Naive thymus-derived CD4-positive, alpha-beta T cell (primary cell): ENCODE measurements at regions of chr19 and their contacts with region 1.

Region 1: GRCh38 chr19:11587302-11587974 is 9.8 kb upstream of the ZNF627 start:
- DNase-seq: peak; percentile 58 to 80 (median 66)
- ATAC-seq: peak; percentile 95
- H3K4me3 ChIP-seq: no peak overlapping the region
- H3K4me3 Mint-ChIP-seq: no peak overlapping the region
- H3K27ac ChIP-seq: no peak overlapping the region
- H3K27ac Mint-ChIP-seq: peak overlapping the region in 1 of 9 donors; percentile 36
- H3K4me1 ChIP-seq: no peaks in the 10 kb centered on the region
- H3K4me1 Mint-ChIP-seq: peaks cover 0 to 16% (median 7%) of the 10 kb centered on the region in 7 donors
- H3K27me3 ChIP-seq: no peaks in the 10 kb centered on the region
- H3K27me3 Mint-ChIP-seq: no peaks in the 10 kb centered on the region

Region 2: GRCh38 chr19:11137542-11138384 is 449.7 kb before region 1 on chr19:
- CTCF ChIA-PET with region 1: no interaction called
- POLR2A ChIA-PET with region 1: no interaction called
- intact Hi-C with region 1: loop called in 1 of 2 experiments (anchors 1 kb)
- DNase-seq: peak; percentile 27 to 64 (median 56)
- ATAC-seq: peak; percentile 81
- H3K4me3 ChIP-seq: peak overlapping the region; percentile 52
- H3K4me3 Mint-ChIP-seq: peak overlapping the region; percentile 76 to 90 (median 86)
- H3K27ac ChIP-seq: no peak overlapping the region
- H3K27ac Mint-ChIP-seq: peak overlapping the region in 8 of 9 donors; percentile 37 to 81 (median 66)
- H3K4me1 ChIP-seq: peaks cover 4 to 12% of the 10 kb centered on the region in 2 donors
- H3K4me1 Mint-ChIP-seq: peaks cover 7 to 23% (median 11%) of the 10 kb centered on the region in 7 donors
- H3K27me3 ChIP-seq: no peaks in the 10 kb centered on the region
- H3K27me3 Mint-ChIP-seq: no peaks in the 10 kb centered on the region

Region 3: DNA sequence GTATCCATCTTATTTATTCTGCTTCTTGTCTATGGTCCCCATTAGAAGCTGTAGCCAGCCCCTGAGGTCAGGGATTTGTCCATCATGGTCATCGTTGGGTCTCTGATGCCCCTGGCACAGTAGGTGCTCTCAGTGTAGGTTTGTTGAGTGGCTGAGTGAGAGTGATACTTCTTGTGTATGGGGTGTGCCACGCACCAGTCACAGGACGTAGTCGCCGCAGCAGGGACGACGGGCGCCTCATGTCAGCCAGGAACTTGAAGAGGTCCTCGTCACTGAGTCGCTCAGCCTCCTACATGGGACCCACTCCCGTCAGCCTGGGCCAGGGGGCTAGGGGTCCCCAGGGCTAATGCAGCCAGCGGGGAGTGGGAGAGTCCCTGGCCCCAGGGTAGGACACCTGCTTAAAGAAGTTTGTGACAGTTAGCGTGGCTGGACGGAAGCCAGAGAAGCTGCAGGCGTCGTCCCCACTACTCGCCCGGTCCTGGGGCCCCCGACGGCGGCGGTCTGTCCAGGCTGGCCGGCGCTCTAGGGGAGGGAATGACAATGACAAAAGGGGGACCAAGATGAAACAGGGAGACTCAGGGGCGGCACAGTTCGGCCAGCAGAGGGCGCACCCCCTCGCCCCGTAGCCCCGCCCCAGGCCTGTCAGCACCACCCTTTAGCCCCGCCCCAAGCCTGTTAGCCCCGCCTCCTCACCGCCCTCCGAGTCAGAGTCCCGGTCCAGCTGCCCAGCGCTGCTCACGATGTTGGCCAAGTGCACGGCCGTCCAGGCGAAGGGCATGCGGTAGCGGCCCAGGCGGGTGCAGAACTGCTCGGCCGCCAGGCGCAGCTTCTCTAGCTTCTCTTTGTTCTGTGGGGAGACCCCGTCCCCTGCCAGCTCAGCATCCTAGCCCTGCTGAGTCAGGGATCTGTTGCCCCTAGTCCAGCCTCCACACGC is 344.3 kb before region 1 on chr19:
- CTCF ChIA-PET with region 1: no interaction called
- POLR2A ChIA-PET with region 1: no interaction called
- intact Hi-C with region 1: loop called in 1 of 2 experiments (anchors 2 kb)
- DNase-seq: peak; percentile 47 to 83 (median 71)
- ATAC-seq: peak; percentile 100
- H3K4me3 ChIP-seq: no peak overlapping the region
- H3K4me3 Mint-ChIP-seq: peak overlapping the region in 8 of 10 donors; percentile 23 to 74 (median 35)
- H3K27ac ChIP-seq: no peak overlapping the region
- H3K27ac Mint-ChIP-seq: no peak overlapping the region
- H3K4me1 ChIP-seq: no peaks in the 10 kb centered on the region
- H3K4me1 Mint-ChIP-seq: peaks cover 4 to 7% (median 5%) of the 10 kb centered on the region in 7 donors
- H3K27me3 ChIP-seq: no peaks in the 10 kb centered on the region
- H3K27me3 Mint-ChIP-seq: peaks cover 0 to 29% (median 6%) of the 10 kb centered on the region in 5 donors

Region 4: DNA sequence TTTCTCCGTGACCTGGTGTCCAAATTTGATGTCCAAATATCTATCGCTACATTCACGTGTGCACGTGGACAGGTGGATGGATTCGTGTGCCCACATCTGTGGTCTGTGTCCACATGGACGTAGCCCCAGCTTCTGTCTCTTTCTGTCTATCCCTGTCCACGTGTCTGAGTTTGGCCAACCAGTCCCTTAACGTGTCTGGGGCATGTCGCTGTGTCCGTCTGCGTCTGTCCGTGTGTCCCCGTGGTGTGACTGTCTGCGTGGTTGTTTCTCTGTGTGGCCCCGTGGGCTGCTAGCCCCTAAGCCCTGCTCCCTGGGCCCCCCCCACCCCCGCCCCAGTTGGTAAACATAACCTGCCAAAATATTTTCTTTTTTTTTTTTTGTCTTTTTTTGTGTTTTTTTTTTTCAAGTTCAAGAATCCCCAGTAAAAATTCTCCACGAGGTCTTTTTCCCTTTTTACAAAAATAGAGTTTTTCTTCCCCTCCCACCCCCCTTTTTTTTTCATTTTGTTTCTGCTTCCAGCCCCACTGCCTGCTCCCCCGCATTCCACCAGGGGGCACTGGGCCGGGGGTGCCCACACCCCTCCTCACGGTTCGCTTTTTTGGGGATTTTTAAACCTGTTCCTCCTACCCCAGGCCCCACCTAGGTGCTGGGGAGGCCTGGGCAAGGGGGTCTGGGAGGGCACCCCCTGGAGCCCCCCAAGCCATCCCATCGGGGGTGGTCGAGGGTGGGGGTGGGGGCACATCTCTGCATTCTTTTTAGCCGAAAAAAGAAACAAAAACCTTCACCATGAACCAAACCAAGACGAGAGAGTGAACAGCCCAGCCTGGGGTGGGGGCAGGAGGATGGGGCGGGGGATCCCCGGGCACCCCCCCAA is 133.7 kb before region 1 on chr19:
- CTCF ChIA-PET with region 1: no interaction called
- POLR2A ChIA-PET with region 1: no interaction called
- intact Hi-C with region 1: loop called in 1 of 2 experiments (anchors 5 kb)
- DNase-seq: peak in 3 of 9 donors; percentile 9 to 15 (median 12)
- ATAC-seq: peak; percentile 58
- H3K4me3 ChIP-seq: no peak overlapping the region
- H3K4me3 Mint-ChIP-seq: peak overlapping the region in 1 of 10 donors; percentile 38
- H3K27ac ChIP-seq: no peak overlapping the region
- H3K27ac Mint-ChIP-seq: no peak overlapping the region
- H3K4me1 ChIP-seq: no peaks in the 10 kb centered on the region
- H3K4me1 Mint-ChIP-seq: peaks cover 0 to 3% (median 0%) of the 10 kb centered on the region in 7 donors
- H3K27me3 ChIP-seq: no peaks in the 10 kb centered on the region
- H3K27me3 Mint-ChIP-seq: no peaks in the 10 kb centered on the region

Region 5: DNA sequence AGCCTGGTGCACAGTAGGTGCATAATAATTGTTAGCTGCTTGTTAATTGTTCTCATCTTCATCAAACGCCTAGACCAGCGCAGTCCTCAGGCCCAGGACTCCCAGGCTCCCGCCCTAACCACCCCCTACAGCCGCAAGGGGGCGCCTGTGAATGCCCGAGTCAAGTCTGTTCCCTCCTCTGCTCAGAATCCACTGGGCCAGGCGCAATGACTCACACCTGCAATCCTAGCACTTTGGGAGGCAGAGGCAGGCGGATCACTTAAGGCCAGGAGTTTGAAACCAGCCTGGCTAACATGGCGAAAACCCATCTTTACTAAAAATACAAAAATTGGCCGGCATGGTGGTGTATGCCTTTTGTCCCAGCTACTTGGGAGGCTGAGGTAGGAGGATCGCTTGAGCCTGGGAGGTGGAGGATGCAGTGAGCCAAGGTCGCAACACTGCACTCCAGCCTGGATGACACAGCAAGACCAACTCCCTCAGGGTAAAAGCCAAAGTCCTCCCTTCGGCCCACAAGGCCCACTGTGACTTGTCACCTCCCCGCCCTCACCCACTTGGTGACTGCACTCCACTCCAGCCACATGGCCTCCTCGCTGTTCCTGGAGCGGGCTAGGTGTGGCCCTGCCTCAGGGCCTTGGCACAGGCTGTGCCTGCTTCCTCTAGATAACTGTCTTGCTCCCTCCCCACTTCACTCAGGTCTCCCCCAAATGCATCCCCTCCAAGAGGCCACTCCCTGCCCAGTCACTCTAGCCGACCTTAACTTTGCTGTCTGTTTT is 90.9 kb before region 1 on chr19:
- CTCF ChIA-PET with region 1: interaction called, 3 read pairs
- POLR2A ChIA-PET with region 1: no interaction called
- intact Hi-C with region 1: loop called (anchors 1 kb)
- DNase-seq: peak; percentile 27 to 64 (median 49)
- ATAC-seq: peak; percentile 73
- H3K4me3 ChIP-seq: no peak overlapping the region
- H3K4me3 Mint-ChIP-seq: no peak overlapping the region
- H3K27ac ChIP-seq: no peak overlapping the region
- H3K27ac Mint-ChIP-seq: peak overlapping the region in 1 of 9 donors; percentile 51
- H3K4me1 ChIP-seq: no peaks in the 10 kb centered on the region
- H3K4me1 Mint-ChIP-seq: peaks cover 0 to 11% (median 0%) of the 10 kb centered on the region in 7 donors
- H3K27me3 ChIP-seq: no peaks in the 10 kb centered on the region
- H3K27me3 Mint-ChIP-seq: no peaks in the 10 kb centered on the region

Region 6: DNA sequence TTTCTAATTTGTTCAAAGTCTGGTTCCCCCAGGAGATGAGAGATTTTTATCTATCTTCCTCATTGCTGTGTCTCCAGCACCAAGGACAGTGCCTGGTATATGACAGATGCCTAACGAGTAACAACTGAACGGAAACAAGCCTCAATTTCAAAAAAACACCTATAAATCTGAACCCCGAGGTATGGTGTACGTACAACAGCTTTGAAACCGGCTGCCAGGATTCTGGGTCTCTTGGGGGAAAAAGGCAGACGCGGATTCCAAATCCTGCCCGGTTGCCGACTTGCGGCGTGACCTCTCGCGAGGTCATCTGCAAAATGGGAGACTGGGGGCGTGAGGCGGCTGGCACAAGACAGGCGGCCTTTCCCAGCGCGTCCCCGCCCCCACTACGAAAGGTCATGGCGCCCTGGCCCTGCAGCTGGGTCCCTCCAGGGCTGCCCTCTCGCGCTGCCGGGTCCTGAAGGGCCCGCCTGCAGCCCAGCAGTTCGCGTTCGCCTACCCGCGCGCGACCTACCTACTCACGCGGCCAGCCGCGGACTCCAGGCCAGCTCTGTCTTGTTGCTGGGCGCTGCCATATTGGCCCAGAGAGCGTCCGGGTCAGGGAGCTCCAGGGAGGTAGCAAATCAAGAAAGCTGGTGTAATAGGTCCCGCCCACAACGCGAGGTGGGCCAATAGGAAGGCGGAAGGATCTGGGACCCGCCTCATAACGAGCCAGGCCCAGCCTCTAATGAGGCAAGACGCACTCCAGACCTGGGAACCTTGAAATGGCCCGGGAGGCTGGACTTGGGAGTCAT is 58.7 kb before region 1 on chr19 and contains the start of gene ECSIT:
- CTCF ChIA-PET with region 1: interaction called, 3 read pairs
- POLR2A ChIA-PET with region 1: no interaction called
- intact Hi-C with region 1: loop called in 1 of 2 experiments (anchors 2 kb)
- DNase-seq: peak; percentile 78 to 93 (median 89)
- ATAC-seq: peak; percentile 99
- H3K4me3 ChIP-seq: peak within 1 kb of the TSS; percentile 90
- H3K4me3 Mint-ChIP-seq: peak within 1 kb of the TSS; percentile 89 to 99 (median 96)
- H3K27ac ChIP-seq: peak within 1 kb of the TSS; percentile 77
- H3K27ac Mint-ChIP-seq: peak within 1 kb of the TSS; percentile 85 to 96 (median 94)
- H3K4me1 ChIP-seq: peaks cover 8 to 10% of the 10 kb centered on the region in 2 donors
- H3K4me1 Mint-ChIP-seq: peaks cover 12 to 27% (median 21%) of the 10 kb centered on the region in 7 donors
- H3K27me3 ChIP-seq: no peaks in the 10 kb centered on the region
- H3K27me3 Mint-ChIP-seq: no peaks in the 10 kb centered on the region
- total RNA-seq, gene ECSIT: 25.8 to 50.3 (median 32.5) TPM

Region 7: GRCh38 chr19:11535792-11536595 is 51.4 kb before region 1 on chr19:
- CTCF ChIA-PET with region 1: interaction called, 5 read pairs
- POLR2A ChIA-PET with region 1: interaction called, 4 read pairs
- intact Hi-C with region 1: loop called (anchors 1 kb)
- DNase-seq: peak; percentile 59 to 95 (median 68)
- ATAC-seq: peak; percentile 95
- H3K4me3 ChIP-seq: peak overlapping the region; percentile 52
- H3K4me3 Mint-ChIP-seq: peak overlapping the region; percentile 59 to 88 (median 74)
- H3K27ac ChIP-seq: peak overlapping the region; percentile 43
- H3K27ac Mint-ChIP-seq: peak overlapping the region in 8 of 9 donors; percentile 2 to 88 (median 60)
- H3K4me1 ChIP-seq: peaks cover 5% of the 10 kb centered on the region in 2 donors
- H3K4me1 Mint-ChIP-seq: peaks cover 12 to 22% (median 16%) of the 10 kb centered on the region in 7 donors
- H3K27me3 ChIP-seq: peaks cover 0 to 3% of the 10 kb centered on the region in 2 donors
- H3K27me3 Mint-ChIP-seq: peaks cover 11 to 36% (median 16%) of the 10 kb centered on the region in 5 donors

Region 8: DNA sequence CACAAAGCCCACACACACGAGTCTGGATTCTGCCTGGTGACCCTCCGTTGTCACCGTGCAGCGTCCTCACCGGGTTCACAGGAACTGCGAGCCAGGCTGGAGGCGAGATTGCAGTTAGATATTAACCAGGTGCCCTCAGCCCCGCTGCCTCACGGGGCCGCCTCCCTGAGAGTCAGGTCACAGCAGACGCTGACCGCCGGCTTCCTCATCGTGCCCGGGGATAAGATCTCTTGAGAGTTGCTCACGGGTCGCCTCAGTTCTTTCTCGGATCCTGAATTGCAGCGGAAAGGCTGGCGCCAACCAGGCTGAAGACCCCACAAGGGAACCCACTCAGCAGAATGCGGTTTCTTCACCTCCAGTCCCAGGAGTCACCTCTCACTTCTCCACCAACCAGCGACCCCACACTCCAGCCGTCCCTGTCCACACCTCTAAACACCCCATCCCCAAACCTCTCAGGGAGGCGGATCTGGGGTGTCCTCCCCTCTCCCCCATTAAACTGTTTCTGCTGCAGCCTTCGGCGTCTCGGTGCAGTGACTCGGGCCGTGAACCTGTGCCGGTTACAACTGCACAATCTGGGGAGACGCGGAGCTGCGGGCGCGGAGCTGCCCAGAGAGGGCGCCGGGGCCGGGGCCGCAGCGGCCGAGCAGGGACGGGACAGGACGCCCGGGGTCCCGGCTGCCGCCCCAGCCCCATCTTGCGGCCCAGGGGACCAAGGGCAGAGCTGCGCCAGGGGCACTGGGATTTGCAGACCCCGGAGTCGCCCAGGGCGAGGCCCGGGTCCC is 150.7 kb after region 1 on chr19:
- CTCF ChIA-PET with region 1: no interaction called
- POLR2A ChIA-PET with region 1: no interaction called
- intact Hi-C with region 1: no loop called
- DNase-seq: peak in 7 of 9 donors; percentile 5 to 33 (median 18)
- ATAC-seq: peak; percentile 53
- H3K4me3 ChIP-seq: peak overlapping the region; percentile 75
- H3K4me3 Mint-ChIP-seq: peak overlapping the region; percentile 94 to 100 (median 98)
- H3K27ac ChIP-seq: peak overlapping the region; percentile 73
- H3K27ac Mint-ChIP-seq: peak overlapping the region; percentile 72 to 96 (median 89)
- H3K4me1 ChIP-seq: peaks cover 0 to 11% of the 10 kb centered on the region in 2 donors
- H3K4me1 Mint-ChIP-seq: peaks cover 13 to 36% (median 26%) of the 10 kb centered on the region in 7 donors
- H3K27me3 ChIP-seq: no peaks in the 10 kb centered on the region
- H3K27me3 Mint-ChIP-seq: peaks cover 0 to 6% (median 0%) of the 10 kb centered on the region in 5 donors